Activated T-helper 1 cell treated with anti-CD3 and anti-CD28 coated beads, Interleukin-12 subunit alpha, Interleukin-12 subunit beta, Interleukin-2, Interleukin-4 antibody, amounts not matched to agents 30 ng/mL and 10 ng/mL and 1 ng/mL, durations not matched to agents 14 hours and 24 hours and 36 hours (primary cell): ENCODE measurements at regions of chr4 and their contacts with region 1.

Region 1: GRCh38 chr4:108018040-108018883 is 28.6 kb downstream of the HADH start:
- DNase-seq: peak; percentile 69
- H3K4me3 Mint-ChIP-seq: no peak overlapping the region
- H3K27ac Mint-ChIP-seq: peak overlapping the region; percentile 4
- H3K4me1 Mint-ChIP-seq: peaks cover 16% of the 10 kb centered on the region
- H3K27me3 Mint-ChIP-seq: no peaks in the 10 kb centered on the region

Region 2: GRCh38 chr4:106463622-106464021 is 1554.6 kb before region 1 on chr4:
- intact Hi-C with region 1: no loop called
- DNase-seq: no peak
- H3K4me3 Mint-ChIP-seq: no peak overlapping the region
- H3K27ac Mint-ChIP-seq: no peak overlapping the region
- H3K4me1 Mint-ChIP-seq: no peaks in the 10 kb centered on the region
- H3K27me3 Mint-ChIP-seq: no peaks in the 10 kb centered on the region

Region 3: DNA sequence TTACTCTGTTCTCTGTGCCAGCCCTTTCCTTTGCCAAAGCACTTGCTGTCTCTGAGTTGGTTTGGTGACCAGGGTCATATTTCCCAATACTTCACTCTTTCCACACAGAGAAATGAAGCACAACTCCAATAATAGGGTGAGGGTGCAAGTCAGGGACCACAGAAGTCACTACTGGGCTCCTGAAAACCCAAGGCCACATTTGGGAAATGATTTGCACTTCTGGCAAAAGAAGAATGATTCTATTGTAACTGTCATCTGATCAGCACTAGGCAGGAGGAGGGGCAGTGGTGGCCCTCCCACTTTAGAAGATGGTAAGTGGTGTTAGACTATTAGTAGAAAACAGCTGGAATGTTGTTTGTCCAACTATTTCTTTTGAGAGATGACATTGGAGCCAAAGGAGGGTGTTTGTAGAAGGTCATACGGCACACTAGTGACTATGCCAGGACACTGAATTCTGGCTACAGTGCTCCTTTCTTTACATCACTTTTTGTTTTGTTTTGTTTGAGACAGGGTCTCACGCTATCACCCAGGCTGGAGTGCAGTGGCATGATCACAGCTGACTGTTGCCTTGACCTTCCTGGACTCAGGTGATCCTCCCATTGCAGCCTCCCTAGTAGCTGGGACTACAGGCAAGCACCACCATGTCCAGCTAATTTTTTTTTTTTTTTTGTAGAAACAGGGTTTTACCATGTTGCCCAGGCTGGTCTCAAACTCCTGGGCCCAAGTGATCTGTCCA is 39.4 kb before region 1 on chr4:
- intact Hi-C with region 1: no loop called
- DNase-seq: no peak
- H3K4me3 Mint-ChIP-seq: no peak overlapping the region
- H3K27ac Mint-ChIP-seq: no peak overlapping the region
- H3K4me1 Mint-ChIP-seq: no peaks in the 10 kb centered on the region
- H3K27me3 Mint-ChIP-seq: no peaks in the 10 kb centered on the region

Region 4: GRCh38 chr4:108360754-108361445 is 342.6 kb after region 1 on chr4:
- intact Hi-C with region 1: loop called (anchors 5 kb)
- DNase-seq: no peak
- H3K4me3 Mint-ChIP-seq: peak overlapping the region; percentile 24
- H3K27ac Mint-ChIP-seq: peak overlapping the region; percentile 3
- H3K4me1 Mint-ChIP-seq: peaks cover 73% of the 10 kb centered on the region
- H3K27me3 Mint-ChIP-seq: peaks cover 2% of the 10 kb centered on the region

Region 5: GRCh38 chr4:108512615-108513505 is 494.6 kb after region 1 on chr4:
- intact Hi-C with region 1: loop called (anchors 1 kb)
- DNase-seq: peak; percentile 25
- H3K4me3 Mint-ChIP-seq: peak overlapping the region; percentile 49
- H3K27ac Mint-ChIP-seq: no peak overlapping the region
- H3K4me1 Mint-ChIP-seq: peaks cover 19% of the 10 kb centered on the region
- H3K27me3 Mint-ChIP-seq: peaks cover 8% of the 10 kb centered on the region

Region 6: DNA sequence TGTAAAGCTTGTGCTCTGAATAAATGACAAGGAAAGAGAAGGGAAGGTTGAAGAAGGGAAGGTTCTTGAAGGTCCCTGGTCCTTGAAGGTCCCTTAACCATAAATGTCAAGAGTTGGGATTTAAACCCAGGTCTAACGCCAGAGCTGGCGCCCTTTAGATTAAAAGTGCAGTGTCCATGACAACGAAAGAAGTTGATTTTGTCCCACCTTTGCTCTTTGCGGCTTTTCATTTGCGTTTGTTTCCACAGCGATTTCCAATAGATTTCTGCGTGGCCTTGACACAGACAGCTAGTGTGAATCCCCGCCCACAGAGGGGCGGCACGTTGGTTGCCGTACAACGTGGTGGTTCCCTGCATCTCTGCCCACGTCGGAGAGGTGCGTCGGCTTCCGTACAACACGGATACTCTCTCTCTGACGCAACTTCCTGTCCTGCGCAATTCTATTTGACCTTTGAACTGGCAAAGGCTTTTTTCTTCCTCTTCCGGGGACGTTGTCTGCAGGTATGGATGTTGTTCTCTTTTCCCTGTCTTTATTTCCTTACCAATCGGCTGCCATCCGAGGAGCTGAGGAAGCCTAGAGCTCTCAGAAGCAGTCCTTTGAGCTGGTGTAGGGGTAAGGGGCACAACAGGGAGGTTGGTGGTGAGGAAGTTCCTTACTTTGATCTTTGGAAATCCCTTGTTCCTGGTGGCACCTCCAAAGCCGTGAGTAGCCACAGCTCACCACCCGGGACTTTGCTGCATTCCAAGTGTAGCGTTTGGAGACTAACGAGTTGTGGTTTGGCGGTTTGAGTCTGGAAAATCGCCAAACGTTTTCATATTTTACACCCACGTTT is 602.1 kb after region 1 on chr4 and contains the start of gene RPL34:
- intact Hi-C with region 1: loop called (anchors 2 kb)
- DNase-seq: peak; percentile 96
- H3K4me3 Mint-ChIP-seq: peak within 1 kb of the TSS; percentile 98
- H3K27ac Mint-ChIP-seq: peak within 1 kb of the TSS; percentile 97
- H3K4me1 Mint-ChIP-seq: peaks cover 43% of the 10 kb centered on the region
- H3K27me3 Mint-ChIP-seq: no peaks in the 10 kb centered on the region
- total RNA-seq, gene RPL34: 1,258 and 1,304 TPM in 2 replicates

Region 7: DNA sequence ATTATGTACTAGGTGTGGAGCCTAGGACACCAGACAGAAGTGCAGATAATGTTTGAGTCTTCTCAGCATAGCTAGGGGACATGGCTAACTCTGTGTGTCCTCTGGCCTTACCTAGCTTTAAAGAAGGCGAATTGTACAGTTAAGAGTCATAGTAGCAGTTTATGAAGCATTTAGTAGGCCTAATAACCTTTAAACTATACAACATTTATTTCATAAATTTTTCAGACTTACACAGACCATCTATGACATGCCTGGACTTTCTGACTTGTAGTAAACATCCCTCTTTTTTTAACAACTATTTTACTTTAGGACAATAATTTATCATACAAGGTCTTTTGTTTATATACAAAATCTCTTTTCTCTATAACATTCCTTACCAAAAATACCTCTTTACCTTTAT is 707.2 kb after region 1 on chr4:
- intact Hi-C with region 1: no loop called
- DNase-seq: no peak
- H3K4me3 Mint-ChIP-seq: no peak overlapping the region
- H3K27ac Mint-ChIP-seq: no peak overlapping the region
- H3K4me1 Mint-ChIP-seq: no peaks in the 10 kb centered on the region
- H3K27me3 Mint-ChIP-seq: peaks cover 10% of the 10 kb centered on the region

Region 8: GRCh38 chr4:108834835-108835384 is 816.6 kb after region 1 on chr4:
- intact Hi-C with region 1: loop called (anchors 10 kb)
- DNase-seq: no peak
- H3K4me3 Mint-ChIP-seq: no peak overlapping the region
- H3K27ac Mint-ChIP-seq: no peak overlapping the region
- H3K4me1 Mint-ChIP-seq: peaks cover 8% of the 10 kb centered on the region
- H3K27me3 Mint-ChIP-seq: peaks cover 5% of the 10 kb centered on the region